ENCODE measurements at regions of chr1 and their contacts with region 1.

Region 1: DNA sequence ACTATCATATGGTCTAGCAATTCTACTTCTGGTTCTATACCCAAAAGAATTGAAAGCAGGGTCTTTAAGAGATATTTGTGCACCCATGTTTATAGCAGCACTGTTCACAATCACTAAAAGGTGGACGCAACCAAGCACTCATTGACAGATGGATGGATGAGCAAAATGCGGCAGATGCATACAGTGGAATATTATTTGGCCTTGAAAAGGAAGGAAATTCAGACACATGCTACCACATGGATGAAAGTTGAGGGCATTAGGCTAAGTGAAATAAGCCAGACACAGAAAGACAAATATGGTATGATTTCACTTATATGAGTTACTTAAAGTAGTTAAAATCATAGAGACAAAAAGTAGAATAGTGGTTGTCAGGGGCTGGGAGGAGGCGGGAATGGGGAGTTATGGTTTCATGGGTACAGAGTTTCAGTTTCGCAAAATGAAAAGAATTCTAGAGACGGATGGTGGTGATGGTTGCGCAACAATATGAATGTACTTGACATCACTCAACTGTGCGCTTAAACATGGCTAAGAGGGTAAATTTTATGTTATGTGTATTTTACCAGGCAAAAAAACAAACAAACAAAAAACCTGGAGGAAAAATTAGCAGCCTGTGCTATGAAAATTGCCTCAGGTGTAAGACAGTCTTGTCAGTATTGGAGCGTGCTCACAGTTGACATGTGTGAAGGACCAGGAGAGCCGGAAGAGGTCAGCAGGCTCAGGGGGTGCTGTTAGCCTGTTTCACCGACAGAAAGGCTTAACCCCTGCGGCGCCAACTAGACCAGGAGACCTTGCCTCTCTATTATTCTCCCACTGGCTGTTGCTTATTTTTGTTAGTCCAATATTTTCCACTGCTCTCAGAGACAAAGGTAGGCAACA is 26.5 kb downstream of the CD247 start:
- DNase-seq: no peak
- ATAC-seq: peak; percentile 65; the same call in 2 of the 3 replicates
- H3K4me3 ChIP-seq: no peak overlapping the region
- H3K27ac ChIP-seq: no peak overlapping the region
- H3K4me1 ChIP-seq: no peaks in the 10 kb centered on the region; the same call in 1 of the 2 replicates
- H3K27me3 ChIP-seq: peaks cover 2 to 21% of the 10 kb centered on the region in 2 experiments; a peak in 4 of 5 replicates
- CTCF ChIP-seq: no peak
- EP300 ChIP-seq: no peak
- POLR2A ChIP-seq: no peak
- RAD21 ChIP-seq: no peak

Region 2: DNA sequence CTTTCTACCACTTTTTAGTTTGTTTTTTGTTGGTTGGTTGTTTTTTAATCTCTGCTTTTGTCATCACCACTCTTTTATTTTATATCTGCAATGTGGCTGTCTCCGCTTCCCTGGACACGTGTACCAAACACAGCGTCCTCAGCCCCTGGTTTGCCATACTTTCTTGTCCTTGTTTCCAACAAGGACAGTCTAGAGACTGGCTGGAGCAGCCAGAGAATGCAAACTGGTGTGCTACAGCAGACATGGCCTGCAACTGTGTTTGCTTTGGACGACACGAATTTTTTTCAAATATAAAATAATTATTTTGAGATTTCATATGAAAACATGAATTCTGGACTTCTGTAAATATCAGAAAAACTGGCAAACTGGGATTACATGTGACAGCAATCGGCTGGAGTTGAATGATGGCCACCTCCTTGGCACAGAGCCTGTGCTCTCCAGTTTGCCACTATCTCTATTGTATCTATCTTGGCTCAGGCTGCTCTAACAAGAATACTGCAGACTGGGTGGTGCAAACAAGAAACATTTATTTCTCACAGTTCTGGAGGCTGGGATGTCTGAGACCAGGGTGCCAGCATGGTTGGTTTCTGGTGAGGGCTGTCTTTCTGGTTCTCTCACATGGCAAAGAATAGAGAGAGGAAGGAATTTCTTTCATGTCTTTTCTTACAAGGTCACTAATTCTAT is 305.7 kb before region 1 on chr1:
- CTCF ChIA-PET with region 1: no interaction called
- POLR2A ChIA-PET with region 1: no interaction called
- in situ Hi-C with region 1: no loop called
- intact Hi-C with region 1: no loop called
- DNase-seq: no peak
- ATAC-seq: no peak
- H3K4me3 ChIP-seq: no peak overlapping the region
- H3K27ac ChIP-seq: no peak overlapping the region
- H3K4me1 ChIP-seq: no peaks in the 10 kb centered on the region
- H3K27me3 ChIP-seq: no peaks in the 10 kb centered on the region
- CTCF ChIP-seq: no peak
- EP300 ChIP-seq: no peak
- POLR2A ChIP-seq: no peak
- RAD21 ChIP-seq: no peak

Region 3: GRCh38 chr1:167474191-167474716 is 17.6 kb before region 1 on chr1:
- CTCF ChIA-PET with region 1: no interaction called
- POLR2A ChIA-PET with region 1: no interaction called
- in situ Hi-C with region 1: no loop called
- intact Hi-C with region 1: loop called (anchors 1 kb)
- DNase-seq: no peak
- ATAC-seq: no peak
- H3K4me3 ChIP-seq: no peak overlapping the region
- H3K27ac ChIP-seq: no peak overlapping the region
- H3K4me1 ChIP-seq: no peaks in the 10 kb centered on the region
- H3K27me3 ChIP-seq: peaks cover 1 to 25% of the 10 kb centered on the region in 2 experiments; a peak in 3 of 5 replicates
- CTCF ChIP-seq: no peak
- EP300 ChIP-seq: no peak
- POLR2A ChIP-seq: no peak
- RAD21 ChIP-seq: no peak